Natural killer cell (primary cell): ENCODE measurements at regions of chr7 and their contacts with region 1.

Region 1: DNA sequence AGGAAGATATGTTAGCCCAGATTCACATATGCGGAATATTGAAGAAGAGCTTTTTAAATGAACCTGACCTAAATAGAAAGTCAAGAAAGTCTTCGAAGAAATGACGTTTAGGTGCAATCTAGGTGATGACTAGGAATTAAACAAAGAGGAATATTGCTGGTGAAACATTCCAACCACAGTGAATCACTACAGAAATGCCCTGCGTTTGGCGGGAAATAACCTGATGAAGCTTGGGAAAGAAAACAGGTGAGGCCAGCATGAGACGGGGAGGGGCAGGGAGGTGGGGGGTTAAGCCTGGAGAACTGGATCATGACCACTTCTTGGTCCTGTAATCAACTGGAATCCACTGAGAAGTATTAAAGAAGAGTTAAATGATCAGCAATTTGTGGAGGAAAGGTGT is 299.4 kb upstream of the VSTM2A start:
- DNase-seq: no peak
- ATAC-seq: no peak
- H3K4me3 ChIP-seq: no peak overlapping the region
- H3K4me3 Mint-ChIP-seq: no peak overlapping the region
- H3K27ac ChIP-seq: no peak overlapping the region
- H3K27ac Mint-ChIP-seq: no peak overlapping the region
- H3K4me1 ChIP-seq: no peaks in the 10 kb centered on the region
- H3K4me1 Mint-ChIP-seq: no peaks in the 10 kb centered on the region
- H3K27me3 ChIP-seq: no peaks in the 10 kb centered on the region
- H3K27me3 Mint-ChIP-seq: no peaks in the 10 kb centered on the region
- CTCF ChIP-seq: no peak

Region 2: GRCh38 chr7:54189330-54189729 is 53.4 kb before region 1 on chr7:
- intact Hi-C with region 1: no loop called
- DNase-seq: no peak
- ATAC-seq: no peak
- H3K4me3 ChIP-seq: no peak overlapping the region
- H3K4me3 Mint-ChIP-seq: no peak overlapping the region
- H3K27ac ChIP-seq: no peak overlapping the region
- H3K27ac Mint-ChIP-seq: no peak overlapping the region
- H3K4me1 ChIP-seq: no peaks in the 10 kb centered on the region
- H3K4me1 Mint-ChIP-seq: no peaks in the 10 kb centered on the region
- H3K27me3 ChIP-seq: no peaks in the 10 kb centered on the region
- H3K27me3 Mint-ChIP-seq: no peaks in the 10 kb centered on the region
- CTCF ChIP-seq: no peak

Region 3: DNA sequence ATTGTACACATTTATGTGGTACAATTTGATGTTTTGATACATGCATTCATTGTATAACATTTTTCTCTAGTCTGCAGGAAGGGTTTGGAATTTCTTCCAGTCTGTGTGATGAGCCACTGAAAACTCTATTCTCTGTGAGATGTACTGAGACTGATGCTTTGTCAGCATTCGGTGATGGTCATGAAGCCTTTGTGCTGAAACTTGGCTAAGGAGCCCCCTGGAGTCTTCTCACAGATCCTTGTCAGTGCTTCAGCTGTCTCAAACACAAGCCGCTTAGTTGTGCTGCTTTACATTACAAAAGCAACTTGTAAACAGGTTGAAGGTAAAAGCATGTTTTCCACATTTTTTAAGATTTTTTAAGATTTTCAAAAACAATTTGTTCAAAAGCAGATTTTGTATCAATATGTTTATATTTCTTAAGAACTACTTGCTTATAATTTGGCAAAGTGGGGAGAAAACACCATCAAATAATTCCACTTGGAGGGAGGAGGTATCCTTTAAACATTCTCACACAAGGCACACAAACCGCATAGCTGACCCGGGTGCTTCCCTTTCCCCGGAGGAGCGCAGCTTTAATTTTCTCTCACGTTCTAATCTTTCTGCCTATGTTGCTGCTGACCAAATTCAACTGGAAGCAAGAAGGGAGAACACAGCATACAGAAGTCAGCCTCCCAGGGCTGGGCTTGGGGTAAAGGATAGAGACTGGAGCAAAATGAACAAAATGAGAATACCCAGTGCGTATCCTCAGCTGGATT is 49.6 kb after region 1 on chr7:
- intact Hi-C with region 1: no loop called
- DNase-seq: no peak
- ATAC-seq: no peak
- H3K4me3 ChIP-seq: no peak overlapping the region
- H3K4me3 Mint-ChIP-seq: no peak overlapping the region
- H3K27ac ChIP-seq: no peak overlapping the region
- H3K27ac Mint-ChIP-seq: no peak overlapping the region
- H3K4me1 ChIP-seq: no peaks in the 10 kb centered on the region
- H3K4me1 Mint-ChIP-seq: no peaks in the 10 kb centered on the region
- H3K27me3 ChIP-seq: no peaks in the 10 kb centered on the region
- H3K27me3 Mint-ChIP-seq: no peaks in the 10 kb centered on the region
- CTCF ChIP-seq: no peak

Region 4: GRCh38 chr7:54326592-54327167 is 83.9 kb after region 1 on chr7:
- intact Hi-C with region 1: loop called (anchors 10 kb)
- DNase-seq: no peak
- ATAC-seq: no peak
- H3K4me3 ChIP-seq: no peak overlapping the region
- H3K4me3 Mint-ChIP-seq: no peak overlapping the region
- H3K27ac ChIP-seq: no peak overlapping the region
- H3K27ac Mint-ChIP-seq: no peak overlapping the region
- H3K4me1 ChIP-seq: no peaks in the 10 kb centered on the region
- H3K4me1 Mint-ChIP-seq: no peaks in the 10 kb centered on the region
- H3K27me3 ChIP-seq: no peaks in the 10 kb centered on the region
- H3K27me3 Mint-ChIP-seq: no peaks in the 10 kb centered on the region
- CTCF ChIP-seq: no peak